Endothelial cell of umbilical vein (primary cell): ENCODE measurements at regions of chr16 and their contacts with region 1.

Region 1: GRCh38 chr16:53346-54236 is at the starts of genes POLR3K and SNRNP25:
- DNase-seq: peak; percentile 98
- H3K4me3 ChIP-seq: peak within 1 kb of the TSS; percentile 20 to 59 (median 49)
- H3K27ac ChIP-seq: no peak within 1 kb of the TSS
- H3K4me1 ChIP-seq: peaks cover 5% of the 10 kb centered on the region
- H3K27me3 ChIP-seq: no peaks in the 10 kb centered on the region
- CTCF ChIP-seq: no peak
- POLR2A ChIP-seq: peak; percentile 86
- total RNA-seq, gene POLR3K: 18.4 and 20.6 TPM in 2 replicates
- total RNA-seq, gene SNRNP25: 41.8 and 50.2 TPM in 2 replicates

Region 2: DNA sequence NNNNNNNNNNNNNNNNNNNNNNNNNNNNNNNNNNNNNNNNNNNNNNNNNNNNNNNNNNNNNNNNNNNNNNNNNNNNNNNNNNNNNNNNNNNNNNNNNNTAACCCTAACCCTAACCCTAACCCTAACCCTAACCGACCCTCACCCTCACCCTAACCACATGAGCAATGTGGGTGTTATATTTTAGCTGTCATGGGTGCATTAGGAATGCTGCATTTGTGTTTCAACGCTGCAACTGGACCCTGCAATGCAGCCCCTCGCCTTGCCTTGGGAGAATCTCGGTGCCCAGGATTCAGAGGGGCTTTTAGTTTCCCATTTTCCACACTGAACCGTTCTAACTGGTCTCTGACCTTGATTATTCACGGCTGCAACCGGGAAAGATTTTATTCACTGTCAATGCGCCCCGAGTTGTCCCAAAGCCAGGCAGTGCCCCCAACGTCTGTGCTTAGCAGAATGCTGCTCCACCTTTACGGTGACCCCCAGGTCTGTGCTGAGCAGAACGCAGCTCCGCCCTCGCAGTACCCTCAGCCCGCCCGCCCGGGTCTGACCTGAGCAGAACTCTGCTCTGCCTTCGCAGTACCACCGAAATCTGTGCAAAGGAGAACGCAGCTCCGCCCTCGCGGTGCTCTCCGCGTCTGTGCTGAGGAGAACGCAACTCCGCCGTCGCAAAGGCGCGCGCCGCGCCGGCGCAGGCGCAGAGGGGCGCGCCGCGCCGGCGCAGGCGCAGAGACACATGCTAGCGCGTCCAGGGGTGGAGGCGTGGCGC is 43.5 kb before region 1 on chr16:
- CTCF ChIA-PET with region 1: no interaction called
- POLR2A ChIA-PET with region 1: no interaction called
- dilution Hi-C with region 1: no loop called
- intact Hi-C with region 1: no loop called
- DNase-seq: no peak
- H3K4me3 ChIP-seq: peak overlapping the region in 1 of 3 experiments; percentile 27
- H3K27ac ChIP-seq: no peak overlapping the region
- H3K4me1 ChIP-seq: no peaks in the 10 kb centered on the region
- H3K27me3 ChIP-seq: no peaks in the 10 kb centered on the region
- CTCF ChIP-seq: no peak
- POLR2A ChIP-seq: no peak

Region 3: DNA sequence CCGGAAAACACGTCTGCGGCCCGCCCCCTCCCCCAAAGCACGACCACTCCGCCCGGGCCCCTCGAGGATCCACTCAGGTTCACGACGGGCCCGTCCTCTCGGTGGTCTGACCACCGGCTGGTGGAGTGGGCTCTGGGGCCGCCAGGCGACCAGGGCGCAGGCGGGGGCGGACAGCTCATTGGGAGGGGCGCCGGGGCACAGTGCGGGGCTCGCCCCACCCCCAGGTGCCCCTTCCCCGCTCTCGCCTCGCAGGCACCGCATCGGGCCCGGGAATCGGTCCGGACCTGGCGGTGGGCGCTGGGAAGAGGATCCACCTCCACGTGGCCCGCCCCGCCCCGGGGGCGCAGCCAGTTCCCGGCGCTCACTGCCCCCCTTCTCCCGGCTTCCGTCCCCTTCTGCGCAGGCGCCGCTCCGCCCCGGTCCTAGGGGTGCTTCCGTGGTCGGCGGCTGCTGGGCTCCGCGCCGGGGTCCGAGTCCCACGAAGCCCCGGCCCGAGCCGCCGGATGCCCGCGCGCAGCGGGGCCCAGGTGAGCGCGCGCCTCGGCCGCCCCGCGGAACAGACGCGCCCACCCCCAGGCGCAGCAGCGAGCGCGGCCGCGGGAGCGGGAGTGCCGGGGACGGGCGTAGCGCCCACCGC is 24.3 kb after region 1 on chr16 and contains the start of gene MPG:
- CTCF ChIA-PET with region 1: interaction called, 3 read pairs
- POLR2A ChIA-PET with region 1: no interaction called
- dilution Hi-C with region 1: no loop called
- intact Hi-C with region 1: loop called (anchors 2 kb)
- DNase-seq: peak; percentile 69
- H3K4me3 ChIP-seq: peak within 1 kb of the TSS; percentile 13 to 73 (median 47)
- H3K27ac ChIP-seq: peak within 1 kb of the TSS; percentile 92
- H3K4me1 ChIP-seq: peaks cover 32% of the 10 kb centered on the region
- H3K27me3 ChIP-seq: no peaks in the 10 kb centered on the region
- CTCF ChIP-seq: no peak
- POLR2A ChIP-seq: peak; percentile 57
- total RNA-seq, gene MPG: 68.1 and 70.5 TPM in 2 replicates

Region 4: DNA sequence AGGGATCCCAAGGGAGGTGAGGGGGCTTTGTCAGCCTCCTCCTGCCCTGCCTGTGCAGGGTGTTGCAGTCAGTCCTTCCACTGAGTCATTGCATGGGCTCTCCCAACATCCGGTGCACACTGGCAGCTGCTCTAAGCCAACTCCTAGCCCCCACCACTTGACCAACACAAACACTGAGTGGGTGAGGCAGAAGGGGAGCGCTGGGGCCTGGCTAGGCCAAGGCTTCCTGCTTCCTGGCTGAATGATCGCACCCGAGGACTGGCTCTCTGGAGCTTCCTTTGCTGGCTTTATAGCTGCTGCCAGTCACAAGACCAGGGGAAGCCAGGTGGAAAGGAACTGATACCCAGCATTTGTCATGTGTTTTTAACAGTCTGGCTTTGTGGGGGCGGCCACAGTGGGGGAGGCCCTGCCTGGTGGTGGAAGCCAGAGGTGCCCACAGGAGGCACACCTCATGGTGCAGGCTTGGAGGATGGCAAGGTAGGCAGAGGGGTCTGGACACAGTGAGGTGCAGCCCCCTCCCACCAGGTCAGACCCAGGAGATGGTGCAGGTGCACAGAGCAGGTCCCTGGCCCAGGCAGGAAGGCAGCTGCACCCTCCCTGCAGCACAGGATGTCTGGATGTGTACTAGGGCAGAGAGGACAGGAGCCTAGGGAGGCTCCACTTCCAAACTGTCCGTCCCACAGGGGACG is 31.3 kb after region 1 on chr16:
- CTCF ChIA-PET with region 1: interaction called, 3 read pairs
- POLR2A ChIA-PET with region 1: no interaction called
- dilution Hi-C with region 1: no loop called
- intact Hi-C with region 1: loop called (anchors 1 kb)
- DNase-seq: peak; percentile 97
- H3K4me3 ChIP-seq: no peak overlapping the region
- H3K27ac ChIP-seq: peak overlapping the region; percentile 78
- H3K4me1 ChIP-seq: peaks cover 33% of the 10 kb centered on the region
- H3K27me3 ChIP-seq: no peaks in the 10 kb centered on the region
- CTCF ChIP-seq: no peak
- POLR2A ChIP-seq: peak; percentile 66

Region 5: GRCh38 chr16:96935-97381 is 43.4 kb after region 1 on chr16:
- CTCF ChIA-PET with region 1: interaction called, 15 read pairs
- POLR2A ChIA-PET with region 1: no interaction called
- dilution Hi-C with region 1: no loop called
- intact Hi-C with region 1: no loop called
- DNase-seq: peak; percentile 87
- H3K4me3 ChIP-seq: no peak overlapping the region
- H3K27ac ChIP-seq: no peak overlapping the region
- H3K4me1 ChIP-seq: no peaks in the 10 kb centered on the region
- H3K27me3 ChIP-seq: no peaks in the 10 kb centered on the region
- CTCF ChIP-seq: peak; percentile 99 to 100
- POLR2A ChIP-seq: peak; percentile 43